PC-9 (cell line): ENCODE measurements at regions of chrX and their contacts with region 1.

Region 1: DNA sequence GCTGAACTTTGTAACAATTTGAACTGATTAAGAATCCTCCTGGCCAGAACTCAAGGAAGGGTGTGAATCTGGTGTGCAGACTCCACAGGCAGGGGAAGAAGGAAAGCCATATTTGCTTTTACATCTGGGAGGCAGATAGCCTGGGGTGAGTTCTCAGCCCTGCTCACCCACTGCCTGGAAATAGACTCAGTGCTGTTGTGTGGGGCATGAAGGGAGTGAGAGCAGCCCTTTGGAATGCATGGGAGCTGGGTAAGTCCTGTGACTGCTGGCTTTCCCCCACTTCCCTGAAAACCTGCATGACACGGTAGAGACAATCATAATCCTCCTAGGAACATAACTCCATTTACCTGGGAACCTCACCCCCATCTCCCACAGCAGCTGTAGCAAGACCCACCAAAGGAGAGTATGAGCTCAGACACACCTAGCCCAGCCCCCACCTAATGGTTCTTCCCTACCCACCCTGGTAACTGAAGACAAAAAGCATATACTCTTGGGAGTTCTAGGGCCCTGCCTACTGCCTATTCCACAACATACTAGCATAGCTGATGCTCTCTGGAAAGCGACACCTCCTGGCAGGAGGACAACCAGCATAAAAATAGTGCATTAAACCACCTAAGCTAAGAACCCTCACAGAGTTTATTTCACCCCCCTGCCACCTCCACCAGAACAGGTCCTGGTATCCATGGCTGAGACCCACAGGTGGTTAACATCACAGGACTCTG is 59.3 kb upstream of the UBQLN2 start:
- DNase-seq: peak; percentile 89 to 91
- H3K4me3 ChIP-seq: peak overlapping the region; percentile 46
- H3K27ac ChIP-seq: peak overlapping the region; percentile 100
- H3K4me1 ChIP-seq: peaks cover 57% of the 10 kb centered on the region
- H3K27me3 ChIP-seq: no peaks in the 10 kb centered on the region
- CTCF ChIP-seq: no peak; the same call in 1 of the 2 replicates

Region 2: GRCh38 chrX:56281789-56282188 is 222.3 kb before region 1 on chrX:
- CTCF ChIA-PET with region 1: interaction called, 3 read pairs
- POLR2A ChIA-PET with region 1: no interaction called
- intact Hi-C with region 1: loop called (anchors 5 kb)
- DNase-seq: peak; percentile 4 to 38
- H3K4me3 ChIP-seq: no peak overlapping the region
- H3K27ac ChIP-seq: no peak overlapping the region
- H3K4me1 ChIP-seq: no peaks in the 10 kb centered on the region
- H3K27me3 ChIP-seq: no peaks in the 10 kb centered on the region
- CTCF ChIP-seq: peak; percentile 62